ENCODE measurements at regions of chr4 and their contacts with region 1.

Region 1: GRCh38 chr4:95087657-95088455 is 330.1 kb downstream of the BMPR1B start:
- DNase-seq: no peak
- ATAC-seq: no peak

Region 2: DNA sequence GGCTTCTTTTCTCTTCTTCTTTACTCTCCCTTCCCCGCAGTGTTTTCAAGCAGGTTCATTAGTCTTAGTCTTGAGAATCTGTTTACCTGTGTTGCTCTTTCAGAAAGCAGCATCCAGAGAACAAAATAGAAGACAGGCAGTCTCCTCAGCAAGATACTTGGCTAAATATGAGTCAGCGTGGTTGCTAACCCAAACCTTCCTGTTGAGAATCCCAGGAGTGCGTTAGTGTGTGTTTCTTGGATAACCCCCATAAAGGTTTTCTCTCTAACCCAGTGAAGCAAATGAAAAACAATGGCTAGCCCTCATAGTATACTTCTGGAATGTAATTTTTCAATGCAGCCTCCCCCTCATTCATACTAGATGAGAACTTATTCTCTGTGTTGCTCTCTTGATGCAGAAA is 289.0 kb before region 1 on chr4:
- intact Hi-C with region 1: no loop called
- DNase-seq: no peak
- ATAC-seq: no peak

Region 3: GRCh38 chr4:95049551-95050233 is 38.2 kb before region 1 on chr4:
- intact Hi-C with region 1: loop called (anchors 2 kb)
- DNase-seq: no peak
- ATAC-seq: no peak

Region 4: DNA sequence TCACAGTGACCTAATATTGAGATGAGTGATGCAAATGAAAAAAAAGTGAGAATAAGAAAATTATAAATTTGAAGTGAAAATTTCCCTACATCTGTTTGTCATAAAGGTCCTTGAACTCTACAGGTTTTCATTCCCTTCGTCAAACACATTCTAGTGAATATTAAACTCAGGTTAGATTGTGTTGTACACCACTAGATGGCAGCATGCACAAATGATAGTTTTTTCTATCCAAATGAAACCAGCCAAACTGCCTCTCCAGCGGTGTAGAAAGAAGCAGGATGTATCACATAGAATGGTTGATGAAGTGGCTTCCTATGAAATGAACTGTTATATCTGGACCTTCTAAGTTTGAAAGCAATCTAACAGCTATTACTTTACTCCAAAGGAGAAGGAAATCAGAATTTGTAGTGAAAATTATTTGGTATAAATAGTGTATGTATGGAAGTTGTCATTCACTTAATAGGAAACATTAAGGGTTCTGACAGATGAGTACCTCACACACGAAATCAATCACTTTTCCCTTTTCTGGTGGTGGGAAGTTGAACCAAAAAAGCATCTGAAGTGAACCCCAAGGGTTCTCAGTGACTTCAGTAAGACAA is 78.2 kb after region 1 on chr4:
- intact Hi-C with region 1: no loop called
- DNase-seq: no peak
- ATAC-seq: peak; percentile 82

Measured in Right ventricle myocardium superior (tissue), 1 donor.